Activated naive CD4-positive, alpha-beta T cell treated with anti-CD3 and anti-CD28 coated beads, Interleukin-2, amount 10 ng/mL, durations not matched to agents 7 days and 5 days (primary cell): ENCODE measurements at regions of chr12 and their contacts with region 1.

Region 1: GRCh38 chr12:21677622-21678277 is 20.1 kb upstream of the LDHB start:
- DNase-seq: peak; percentile 25
- H3K4me3 Mint-ChIP-seq: no peak overlapping the region
- H3K27ac Mint-ChIP-seq: peak overlapping the region; percentile 70
- H3K4me1 Mint-ChIP-seq: peaks cover 49% of the 10 kb centered on the region
- H3K27me3 Mint-ChIP-seq: no peaks in the 10 kb centered on the region

Region 2: DNA sequence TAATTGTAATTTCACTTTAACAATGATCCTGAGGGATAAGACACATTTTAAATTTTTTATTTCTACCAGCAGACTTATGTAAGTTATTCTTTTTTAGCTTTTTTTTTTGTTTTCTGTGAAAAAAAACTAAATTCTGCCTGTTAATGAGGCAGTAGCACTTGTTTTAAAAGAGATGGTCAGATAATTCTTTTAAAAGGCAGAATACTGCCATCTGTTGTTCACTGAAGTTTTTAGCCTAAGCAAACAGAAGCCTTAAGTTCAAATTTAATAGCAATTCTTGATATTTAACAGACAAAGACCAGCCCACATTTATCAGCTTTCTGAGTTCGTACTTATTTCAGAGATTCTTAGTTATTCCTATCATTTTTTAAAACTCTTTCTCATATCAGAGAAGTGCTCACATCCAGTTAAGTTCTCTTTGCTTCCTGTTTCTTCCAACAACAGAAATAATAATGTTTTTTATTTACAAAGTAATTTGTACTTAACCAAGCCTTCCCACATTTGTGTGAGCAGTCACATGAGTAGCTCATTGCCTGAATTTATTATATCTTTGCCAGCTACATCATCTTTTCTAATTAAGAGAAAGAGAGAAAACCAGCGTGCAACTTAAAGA is 1076.0 kb before region 1 on chr12:
- CTCF ChIA-PET with region 1: no interaction called
- DNase-seq: no peak
- H3K4me3 Mint-ChIP-seq: no peak overlapping the region
- H3K27ac Mint-ChIP-seq: no peak overlapping the region
- H3K4me1 Mint-ChIP-seq: no peaks in the 10 kb centered on the region
- H3K27me3 Mint-ChIP-seq: no peaks in the 10 kb centered on the region

Region 3: GRCh38 chr12:21551841-21552465 is 125.8 kb before region 1 on chr12:
- CTCF ChIA-PET with region 1: no interaction called
- DNase-seq: no peak
- H3K4me3 Mint-ChIP-seq: no peak overlapping the region
- H3K27ac Mint-ChIP-seq: no peak overlapping the region
- H3K4me1 Mint-ChIP-seq: no peaks in the 10 kb centered on the region
- H3K27me3 Mint-ChIP-seq: no peaks in the 10 kb centered on the region

Region 4: GRCh38 chr12:21607701-21608100 is 70.0 kb before region 1 on chr12:
- CTCF ChIA-PET with region 1: interaction called, 17 read pairs
- DNase-seq: no peak
- H3K4me3 Mint-ChIP-seq: no peak overlapping the region
- H3K27ac Mint-ChIP-seq: no peak overlapping the region
- H3K4me1 Mint-ChIP-seq: peaks cover 7% of the 10 kb centered on the region
- H3K27me3 Mint-ChIP-seq: peaks cover 4% of the 10 kb centered on the region

Region 5: GRCh38 chr12:21657326-21658077 is 20.2 kb before region 1 on chr12 and contains the start of gene LDHB:
- CTCF ChIA-PET with region 1: interaction called, 10 read pairs
- DNase-seq: peak; percentile 97
- H3K4me3 Mint-ChIP-seq: peak within 1 kb of the TSS; percentile 95
- H3K27ac Mint-ChIP-seq: peak within 1 kb of the TSS; percentile 98
- H3K4me1 Mint-ChIP-seq: peaks cover 56% of the 10 kb centered on the region
- H3K27me3 Mint-ChIP-seq: no peaks in the 10 kb centered on the region